HEK293 (cell line): ENCODE measurements at regions of chr18 and their contacts with region 1.

Region 1: GRCh38 chr18:24413148-24413547 is 13.3 kb upstream of the IMPACT start:
- H3K4me3 ChIP-seq: no peak overlapping the region
- H3K27ac ChIP-seq: no peak overlapping the region
- H3K4me1 ChIP-seq: no peaks in the 10 kb centered on the region
- CTCF ChIP-seq: peak; percentile 38; the same call in 1 of the 2 replicates

Region 2: GRCh38 chr18:24231773-24232735 is 181.1 kb before region 1 on chr18:
- CTCF ChIA-PET with region 1: no interaction called
- POLR2A ChIA-PET with region 1: no interaction called
- H3K4me3 ChIP-seq: no peak overlapping the region
- H3K27ac ChIP-seq: no peak overlapping the region
- H3K4me1 ChIP-seq: peaks cover 5% of the 10 kb centered on the region
- CTCF ChIP-seq: no peak

Region 3: DNA sequence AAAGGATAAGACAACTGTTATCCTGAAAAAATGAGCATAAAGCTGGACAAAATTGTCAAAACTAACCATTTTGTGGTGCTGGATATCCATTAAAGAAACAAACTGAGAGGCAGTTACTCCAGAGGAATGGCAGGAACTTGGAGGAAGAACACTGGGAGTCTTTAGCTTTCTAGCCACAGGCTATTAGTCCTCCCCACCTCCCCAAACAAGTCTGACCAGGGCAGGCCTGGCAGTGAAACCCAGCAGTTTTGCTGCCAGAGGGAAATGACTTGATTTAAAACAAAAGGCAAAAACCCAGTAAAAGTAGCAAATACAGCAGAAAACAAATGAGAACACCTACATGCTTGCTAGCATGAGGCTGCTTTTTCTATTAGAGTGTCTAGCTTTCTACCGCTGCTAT is 50.4 kb before region 1 on chr18:
- CTCF ChIA-PET with region 1: interaction called, 31 read pairs
- POLR2A ChIA-PET with region 1: no interaction called
- H3K4me3 ChIP-seq: no peak overlapping the region
- H3K27ac ChIP-seq: no peak overlapping the region
- H3K4me1 ChIP-seq: no peaks in the 10 kb centered on the region
- CTCF ChIP-seq: no peak